ENCODE measurements at regions of chr17 and their contacts with region 1.

Region 1: DNA sequence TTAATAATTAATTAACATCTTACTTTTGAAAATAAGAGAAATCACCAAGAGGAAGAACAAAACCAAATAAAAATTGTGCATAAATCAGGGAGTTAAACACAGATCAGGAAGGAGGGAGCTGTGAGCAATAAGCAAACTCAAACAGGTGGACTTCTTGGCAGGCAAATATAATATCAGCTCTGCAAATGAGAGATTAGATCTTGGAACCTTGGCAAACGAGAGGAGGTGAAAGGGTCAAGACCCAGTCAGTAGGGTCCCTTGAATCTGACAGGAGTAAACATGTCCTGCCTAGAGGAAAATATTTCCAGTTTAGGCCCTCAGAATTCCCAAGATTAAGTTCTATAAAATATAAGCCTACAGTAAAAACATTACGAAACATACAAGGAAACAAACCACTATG is 153.4 kb downstream of the UTP18 start:
- DNase-seq: no peak
- H3K4me3 ChIP-seq: no peak overlapping the region
- H3K27ac ChIP-seq: no peak overlapping the region
- H3K4me1 ChIP-seq: no peaks in the 10 kb centered on the region
- H3K27me3 ChIP-seq: no peaks in the 10 kb centered on the region
- CTCF ChIP-seq: no peak

Region 2: DNA sequence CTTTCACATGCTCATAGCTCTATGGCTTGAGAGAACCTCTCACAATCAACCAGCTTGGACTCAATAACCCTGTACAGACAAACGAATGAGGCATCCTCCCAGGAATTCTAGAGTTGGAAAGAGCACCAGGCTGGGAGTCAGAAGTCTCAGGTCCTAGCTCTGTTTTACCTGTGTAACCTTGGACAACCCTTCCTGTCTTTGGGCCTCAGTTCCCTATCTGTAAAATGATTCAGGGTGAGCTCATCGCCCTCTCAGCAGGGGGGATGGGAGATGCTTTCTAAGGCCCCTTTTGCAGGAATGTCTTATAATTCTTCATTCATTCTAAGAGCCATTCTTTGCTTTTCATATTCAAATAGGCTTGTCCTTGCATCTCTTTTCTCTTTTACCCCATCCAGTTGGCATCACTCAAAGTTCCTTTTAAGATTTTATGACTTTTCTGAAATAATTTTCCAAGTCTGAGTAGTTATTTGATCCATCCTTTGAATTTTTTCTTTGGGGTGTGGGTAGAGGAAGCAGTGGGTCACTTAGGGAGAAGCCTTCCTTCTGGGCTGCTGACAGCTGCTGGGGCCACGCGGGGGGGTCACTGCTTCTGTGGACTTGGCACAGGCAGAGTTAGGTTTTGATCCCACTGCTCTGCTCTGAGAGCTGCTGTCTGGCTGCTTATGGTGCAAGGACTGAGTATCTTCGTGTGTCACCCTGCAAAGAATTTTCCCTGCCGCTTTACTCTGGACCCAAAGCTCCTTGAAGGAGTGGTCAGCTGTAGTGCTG is 50.7 kb before region 1 on chr17:
- intact Hi-C with region 1: no loop called
- DNase-seq: no peak
- H3K4me3 ChIP-seq: no peak overlapping the region
- H3K27ac ChIP-seq: no peak overlapping the region
- H3K4me1 ChIP-seq: no peaks in the 10 kb centered on the region
- H3K27me3 ChIP-seq: no peaks in the 10 kb centered on the region
- CTCF ChIP-seq: no peak

Region 3: DNA sequence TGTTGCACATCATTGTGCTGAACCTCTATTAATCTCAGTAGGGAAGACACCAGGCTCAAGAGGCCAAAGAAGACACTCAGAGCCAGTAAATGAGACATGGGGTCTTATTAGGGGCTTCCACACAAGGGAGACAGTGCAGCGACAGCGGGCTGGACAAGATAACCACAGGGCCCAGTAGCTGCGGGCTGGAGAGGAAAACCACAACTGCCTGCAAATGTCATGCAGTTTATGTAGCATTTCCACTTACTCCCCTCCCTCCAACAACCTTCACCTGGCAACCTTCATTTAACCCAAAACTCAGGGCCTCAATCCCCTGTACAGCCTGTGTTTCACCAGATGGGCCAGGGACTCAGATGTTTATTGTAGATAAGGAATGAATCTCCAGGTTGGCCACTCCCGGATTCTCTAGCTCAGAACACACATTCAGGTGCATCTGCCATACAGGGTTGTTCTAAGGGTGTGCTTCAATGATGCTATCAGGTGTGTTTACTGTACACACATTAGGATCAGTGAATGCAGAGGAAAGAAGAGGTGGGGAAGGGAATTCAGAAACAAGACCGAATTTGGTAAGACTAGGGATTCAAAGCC is 32.3 kb after region 1 on chr17:
- intact Hi-C with region 1: loop called (anchors 2 kb)
- DNase-seq: no peak
- H3K4me3 ChIP-seq: no peak overlapping the region
- H3K27ac ChIP-seq: no peak overlapping the region
- H3K4me1 ChIP-seq: no peaks in the 10 kb centered on the region
- H3K27me3 ChIP-seq: peaks cover 0 to 3% of the 10 kb centered on the region in 2 donors
- CTCF ChIP-seq: no peak

Measured in tibial artery (tissue), 4 donors.